HepG2 (cell line): ENCODE measurements at regions of chr13 and their contacts with region 1.

Region 1: DNA sequence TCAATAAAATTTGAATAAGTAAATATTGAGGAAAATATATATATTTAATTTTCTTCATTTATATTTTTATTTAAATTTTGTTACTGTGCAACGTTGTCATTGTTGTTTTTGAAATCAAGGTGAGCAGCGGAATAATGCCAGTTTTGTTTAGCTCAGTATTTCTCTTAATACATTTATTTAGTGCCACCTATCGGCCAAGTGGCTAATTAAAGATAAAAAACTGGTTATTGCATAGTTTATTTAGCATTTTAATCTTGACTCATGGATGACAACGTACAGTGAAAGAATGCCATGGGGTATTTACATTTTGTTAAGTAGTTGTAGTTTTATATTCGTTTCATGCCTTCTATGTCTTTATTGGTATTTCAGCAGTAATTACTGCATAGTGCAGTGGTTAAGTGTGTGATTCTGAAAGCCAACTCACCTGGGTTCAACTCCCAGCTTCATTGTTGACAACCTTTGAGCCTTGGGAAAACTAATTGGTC is 265.9 kb downstream of the MYO16 start:
- DNase-seq: peak; percentile 36
- ATAC-seq: no peak
- H3K4me3 ChIP-seq: no peak overlapping the region
- H3K27ac ChIP-seq: no peak overlapping the region
- H3K4me1 ChIP-seq: no peaks in the 10 kb centered on the region
- H3K27me3 ChIP-seq: no peaks in the 10 kb centered on the region
- CTCF ChIP-seq: peak; percentile 39
- EP300 ChIP-seq: no peak
- POLR2A ChIP-seq: no peak
- RAD21 ChIP-seq: no peak

Region 2: DNA sequence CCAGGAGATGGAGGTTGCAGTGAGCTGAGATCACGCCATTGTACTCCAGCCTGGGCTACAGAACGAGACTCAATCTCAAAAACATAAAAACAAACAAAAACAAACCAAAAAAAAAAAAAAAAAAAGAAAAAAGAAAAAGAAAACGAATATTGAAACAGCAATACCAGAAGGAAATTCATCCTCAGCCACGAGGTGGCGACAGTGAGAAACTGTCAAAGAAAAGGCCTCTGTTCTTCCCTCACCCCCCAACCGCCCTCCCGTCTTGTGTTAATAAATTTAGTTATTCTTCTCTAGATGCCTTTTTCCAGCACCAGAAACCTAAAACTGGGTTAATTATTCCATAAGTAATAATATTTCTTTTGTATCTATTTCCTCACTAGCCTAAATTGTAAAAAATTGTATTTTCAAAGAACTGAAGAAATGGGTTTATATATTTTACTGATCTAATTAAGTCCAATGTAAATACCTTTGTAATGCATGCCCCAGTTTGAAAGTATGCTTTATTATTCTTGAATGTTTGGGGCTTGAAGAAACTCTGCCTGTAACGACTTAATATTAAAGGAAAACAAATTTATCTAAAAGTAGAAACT is 718.5 kb before region 1 on chr13:
- CTCF ChIA-PET with region 1: no interaction called
- POLR2A ChIA-PET with region 1: no interaction called
- in situ Hi-C with region 1: no loop called
- intact Hi-C with region 1: loop called (anchors 1 kb)
- DNase-seq: peak; percentile 42
- ATAC-seq: peak; percentile 52; the same call in 2 of the 3 replicates
- H3K4me3 ChIP-seq: no peak overlapping the region
- H3K27ac ChIP-seq: no peak overlapping the region
- H3K4me1 ChIP-seq: no peaks in the 10 kb centered on the region
- H3K27me3 ChIP-seq: no peaks in the 10 kb centered on the region
- CTCF ChIP-seq: peak; percentile 51
- EP300 ChIP-seq: no peak
- POLR2A ChIP-seq: no peak
- RAD21 ChIP-seq: no peak

Region 3: DNA sequence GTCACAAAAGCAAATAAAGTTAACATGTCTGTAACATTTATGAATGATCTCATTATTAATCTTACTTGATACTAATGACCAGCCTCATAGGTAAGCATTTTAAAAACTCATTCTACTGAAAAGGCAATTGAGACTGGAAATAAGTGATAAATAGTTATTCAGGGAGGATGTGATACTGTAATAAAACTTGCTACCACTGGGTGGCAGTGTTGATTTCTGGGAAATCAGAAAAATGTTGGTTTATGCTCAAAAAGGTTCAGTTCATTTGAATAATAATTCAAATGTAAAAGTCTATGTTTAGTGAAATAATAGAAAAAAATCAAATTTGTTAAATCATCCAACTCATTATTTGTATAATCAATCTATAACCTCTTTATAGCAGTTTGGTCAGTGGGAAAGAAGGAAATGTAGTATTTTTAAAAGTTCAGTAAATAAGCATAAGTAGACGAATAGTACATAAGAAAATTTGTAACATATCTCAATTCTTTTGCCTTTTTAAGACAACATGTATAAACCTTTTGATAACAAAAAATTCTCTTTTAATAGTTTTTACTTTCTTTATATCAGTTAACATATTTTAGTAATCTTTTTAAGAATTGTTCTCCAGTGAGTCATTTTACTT is 667.5 kb before region 1 on chr13:
- CTCF ChIA-PET with region 1: interaction called, 3 read pairs
- POLR2A ChIA-PET with region 1: no interaction called
- in situ Hi-C with region 1: no loop called
- intact Hi-C with region 1: loop called (anchors 5 kb)
- DNase-seq: peak; percentile 21
- ATAC-seq: no peak
- H3K4me3 ChIP-seq: no peak overlapping the region
- H3K27ac ChIP-seq: no peak overlapping the region
- H3K4me1 ChIP-seq: peaks cover 31% of the 10 kb centered on the region
- H3K27me3 ChIP-seq: no peaks in the 10 kb centered on the region
- CTCF ChIP-seq: peak; percentile 58
- EP300 ChIP-seq: no peak
- POLR2A ChIP-seq: no peak
- RAD21 ChIP-seq: no peak

Region 4: DNA sequence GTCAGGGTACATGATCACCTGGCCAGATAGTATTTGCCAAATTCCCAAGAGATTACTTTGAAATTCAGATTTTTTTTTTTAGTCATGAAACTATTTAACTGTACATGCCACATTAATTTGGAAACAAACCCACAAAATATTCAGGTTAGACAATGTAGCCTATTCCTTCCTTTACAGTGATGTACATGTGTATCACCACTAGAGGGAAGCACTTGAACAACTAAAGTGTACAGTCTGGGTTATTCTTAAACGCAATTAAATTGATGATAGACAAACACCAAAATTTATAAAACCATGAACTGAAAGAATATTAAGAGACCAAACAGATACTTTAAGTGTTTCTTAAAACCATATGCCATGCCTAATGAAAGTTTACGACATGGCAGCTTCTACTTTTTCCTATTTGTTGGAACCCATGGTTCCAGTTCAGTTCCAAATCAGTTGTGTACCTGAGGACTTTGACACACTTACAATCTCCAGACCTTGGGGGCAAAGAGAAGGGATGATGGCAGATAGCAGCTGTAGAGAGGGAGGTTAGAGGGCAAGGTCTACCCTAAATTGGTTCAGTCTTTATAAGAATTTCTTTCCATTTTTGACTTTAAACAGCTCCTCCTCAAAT is 572.9 kb before region 1 on chr13:
- CTCF ChIA-PET with region 1: interaction called, 8 read pairs
- POLR2A ChIA-PET with region 1: no interaction called
- in situ Hi-C with region 1: loop called (anchors 5 kb)
- intact Hi-C with region 1: loop called (anchors 1 kb)
- DNase-seq: peak; percentile 23
- ATAC-seq: peak; percentile 84
- H3K4me3 ChIP-seq: no peak overlapping the region
- H3K27ac ChIP-seq: no peak overlapping the region
- H3K4me1 ChIP-seq: no peaks in the 10 kb centered on the region
- H3K27me3 ChIP-seq: no peaks in the 10 kb centered on the region
- CTCF ChIP-seq: peak; percentile 70
- EP300 ChIP-seq: no peak
- POLR2A ChIP-seq: no peak
- RAD21 ChIP-seq: 0 out of 2 replicates have a peak, but pooled peaks have one; percentile 16

Region 5: DNA sequence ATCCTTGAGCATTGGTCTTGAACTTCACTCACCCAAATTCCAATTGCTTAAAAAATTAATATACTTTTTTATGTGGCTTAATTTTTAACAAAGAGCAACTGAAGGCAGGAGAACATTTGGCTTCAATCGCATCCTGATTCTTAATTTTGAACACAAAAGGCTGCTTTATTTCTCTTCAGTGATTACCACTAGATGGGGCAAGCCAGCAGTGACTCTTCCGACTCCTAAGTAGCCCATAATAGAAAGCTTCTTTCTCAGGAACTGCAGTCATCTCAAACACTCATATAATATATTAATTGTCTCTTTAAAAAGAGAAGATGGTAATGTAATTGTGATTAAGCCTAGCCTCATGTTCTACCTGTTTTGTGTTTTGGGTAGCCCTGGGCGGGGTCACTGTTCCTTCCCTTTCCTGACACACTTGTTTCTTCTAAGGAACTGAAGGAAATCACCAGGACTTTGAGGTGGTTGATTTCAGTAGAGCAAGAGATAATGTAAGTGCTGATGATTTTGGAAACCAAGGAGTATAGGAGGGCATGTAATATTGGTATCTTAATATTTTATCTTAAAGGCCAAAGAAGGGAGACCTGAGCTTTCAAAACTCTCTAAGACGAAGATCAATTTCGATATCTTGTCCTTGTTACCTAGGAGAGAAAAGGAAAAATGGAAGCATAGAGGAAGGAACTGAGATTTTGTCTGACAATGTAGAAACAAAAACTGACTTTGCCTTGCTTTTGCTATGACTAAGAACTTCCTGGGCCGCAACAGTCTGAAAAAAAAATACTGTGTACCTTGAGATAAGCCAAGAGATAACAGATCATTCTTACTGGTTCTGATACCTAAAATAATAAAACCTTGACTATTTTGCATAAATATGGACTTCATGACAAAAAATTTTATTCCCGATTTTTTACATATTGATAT is 552.6 kb before region 1 on chr13:
- CTCF ChIA-PET with region 1: no interaction called
- POLR2A ChIA-PET with region 1: no interaction called
- in situ Hi-C with region 1: no loop called
- intact Hi-C with region 1: loop called (anchors 1 kb)
- DNase-seq: peak; percentile 15
- ATAC-seq: peak; percentile 38; the same call in 1 of the 3 replicates
- H3K4me3 ChIP-seq: no peak overlapping the region
- H3K27ac ChIP-seq: no peak overlapping the region
- H3K4me1 ChIP-seq: no peaks in the 10 kb centered on the region
- H3K27me3 ChIP-seq: no peaks in the 10 kb centered on the region
- CTCF ChIP-seq: peak; percentile 35; the same call in 1 of the 2 replicates
- EP300 ChIP-seq: no peak
- POLR2A ChIP-seq: no peak
- RAD21 ChIP-seq: no peak